Left cardiac atrium (tissue), 4 donors: ENCODE measurements at regions of chr10 and their contacts with region 1.

Region 1: GRCh38 chr10:6014241-6014761 is 37.0 kb upstream of the IL15RA start:
- DNase-seq: peak; percentile 69
- ATAC-seq: peak; percentile 24 to 54

Region 2: DNA sequence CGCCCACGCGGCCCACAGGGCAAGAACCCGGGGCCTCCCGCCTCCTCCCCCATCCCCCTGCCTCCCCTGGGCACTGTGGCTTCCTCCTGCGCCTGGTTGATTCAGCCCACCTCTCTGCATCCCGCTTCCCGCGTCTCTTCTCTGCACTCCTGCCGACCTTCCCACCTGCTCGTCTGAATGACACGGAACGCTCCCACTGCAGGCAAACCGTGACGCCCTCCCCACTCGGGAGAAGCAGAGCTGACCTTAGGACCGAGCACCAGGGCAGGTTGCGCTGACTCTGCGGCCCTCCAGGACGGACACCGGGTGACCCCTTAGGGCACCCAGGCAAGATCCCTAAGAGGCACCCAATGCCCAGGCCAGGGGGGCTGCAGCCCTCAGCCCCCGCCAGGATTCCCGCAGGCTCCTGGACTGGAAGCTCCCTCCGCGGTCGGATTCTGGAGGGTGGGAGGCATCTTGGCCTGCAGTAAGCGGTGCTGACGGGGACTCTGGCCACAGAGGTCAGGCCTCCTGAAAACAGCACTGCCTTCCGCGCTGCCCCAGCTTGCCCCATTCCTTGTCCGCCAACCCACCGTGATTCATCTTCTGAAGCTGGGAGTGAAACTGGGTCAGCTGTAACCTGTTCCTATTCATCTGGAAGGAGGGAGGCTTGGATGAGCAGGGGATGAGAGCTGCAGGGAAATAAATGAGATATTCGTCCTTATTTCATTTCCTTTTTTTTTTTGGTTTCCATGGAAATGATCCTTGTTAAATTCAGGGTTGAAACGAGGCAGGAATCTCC is 488.6 kb before region 1 on chr10:
- intact Hi-C with region 1: no loop called
- DNase-seq: no peak
- ATAC-seq: peak in 1 of 2 donors; percentile 74

Region 3: GRCh38 chr10:5764422-5765297 is 249.6 kb before region 1 on chr10:
- intact Hi-C with region 1: no loop called
- DNase-seq: no peak
- ATAC-seq: no peak

Region 4: GRCh38 chr10:6068422-6068821 is 54.1 kb after region 1 on chr10:
- intact Hi-C with region 1: loop called in 1 of 2 experiments (anchors 10 kb)
- DNase-seq: no peak
- ATAC-seq: peak in 1 of 2 donors; percentile 44

Region 5: DNA sequence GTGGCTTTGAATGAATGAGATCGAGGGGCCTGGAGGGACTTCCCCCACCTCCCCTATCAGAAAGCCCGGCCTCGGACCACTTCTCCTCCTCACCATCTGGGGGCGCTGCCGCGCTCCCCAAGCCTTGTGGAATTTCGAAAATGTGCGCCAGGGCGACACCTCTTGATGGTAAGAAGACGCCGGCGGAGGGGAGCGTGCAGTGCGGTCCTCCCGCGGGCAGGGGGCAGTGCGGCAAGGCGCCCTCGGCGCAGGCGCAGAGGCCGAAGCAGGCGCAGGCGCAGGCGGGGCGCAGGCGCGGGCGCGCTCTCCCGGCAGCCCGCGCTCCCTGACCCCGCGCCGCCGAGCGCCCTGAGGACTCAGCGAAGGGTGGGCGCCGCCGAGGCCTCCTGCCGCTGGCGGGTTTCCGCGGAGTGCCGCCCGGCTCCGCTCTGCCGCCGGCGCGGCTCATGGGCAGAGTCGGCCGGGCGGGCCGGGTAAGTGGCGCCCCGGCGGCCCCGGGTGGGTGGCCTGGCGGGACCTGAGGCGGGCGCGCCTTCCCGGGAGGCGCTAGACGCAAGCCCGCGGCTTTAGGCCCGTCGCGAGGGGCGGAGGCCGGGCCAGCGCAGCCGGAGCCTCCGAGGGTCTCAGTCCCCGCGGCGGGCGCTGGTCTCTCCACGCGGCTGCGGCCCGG is 74.6 kb after region 1 on chr10 and contains the start of gene RBM17:
- intact Hi-C with region 1: loop called in 1 of 2 experiments (anchors 10 kb)
- DNase-seq: peak; percentile 97
- ATAC-seq: peak; percentile 95 to 98
- total RNA-seq, gene RBM17: 58.6 to 80.3 TPM

Region 6: GRCh38 chr10:6163364-6164270 is 149.3 kb after region 1 on chr10:
- intact Hi-C with region 1: no loop called
- DNase-seq: peak; percentile 92
- ATAC-seq: peak; percentile 98 to 99

Region 7: DNA sequence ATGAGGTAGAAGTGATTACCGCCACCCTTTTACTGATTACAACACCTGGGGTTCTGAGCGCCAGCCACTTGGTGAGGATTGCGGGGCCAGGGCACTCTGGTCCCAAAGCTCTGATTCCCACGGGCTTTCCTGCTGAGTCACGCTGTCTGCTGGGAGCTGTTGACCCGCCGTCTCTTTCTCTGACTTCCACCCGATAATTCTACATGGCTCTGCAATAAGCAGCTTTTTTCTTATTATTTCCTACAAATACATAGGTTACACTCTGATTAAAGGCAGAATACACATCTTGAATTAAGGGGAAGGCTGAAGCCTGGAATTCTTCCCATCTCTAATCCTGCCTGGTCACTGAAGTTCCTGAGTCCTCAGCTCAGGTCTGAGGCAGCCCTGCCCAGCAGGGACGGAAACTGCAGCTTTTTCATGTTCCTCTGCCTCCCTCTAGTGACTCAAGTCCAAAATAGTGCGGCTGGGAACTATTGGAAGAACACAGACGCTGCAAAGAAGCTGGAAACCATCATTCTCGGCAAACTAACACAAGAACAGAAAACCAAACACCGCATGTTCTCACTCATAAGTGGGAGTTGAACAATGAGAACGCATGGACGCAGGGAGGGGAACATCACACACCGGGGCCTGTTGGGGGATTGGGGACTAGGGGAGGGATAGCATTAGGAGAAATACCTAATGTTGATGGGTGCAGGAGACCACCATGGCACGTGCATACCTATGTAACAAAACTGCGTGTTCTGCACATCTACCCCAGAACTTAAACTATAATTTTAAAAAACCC is 387.5 kb after region 1 on chr10:
- intact Hi-C with region 1: loop called (anchors 10 kb)
- DNase-seq: peak; percentile 80
- ATAC-seq: peak; percentile 95 to 97